Left cardiac atrium (tissue), 4 donors: ENCODE measurements at regions of chr12 and their contacts with region 1.

Region 1: GRCh38 chr12:104108755-104109445 is 29.1 kb downstream of the NFYB start:
- DNase-seq: peak; percentile 71
- ATAC-seq: peak; percentile 63 to 82

Region 2: GRCh38 chr12:103626498-103626897 is 482.4 kb before region 1 on chr12:
- intact Hi-C with region 1: loop called in 1 of 2 experiments (anchors 10 kb)
- DNase-seq: peak; percentile 48
- ATAC-seq: peak; percentile 66 to 93

Region 3: DNA sequence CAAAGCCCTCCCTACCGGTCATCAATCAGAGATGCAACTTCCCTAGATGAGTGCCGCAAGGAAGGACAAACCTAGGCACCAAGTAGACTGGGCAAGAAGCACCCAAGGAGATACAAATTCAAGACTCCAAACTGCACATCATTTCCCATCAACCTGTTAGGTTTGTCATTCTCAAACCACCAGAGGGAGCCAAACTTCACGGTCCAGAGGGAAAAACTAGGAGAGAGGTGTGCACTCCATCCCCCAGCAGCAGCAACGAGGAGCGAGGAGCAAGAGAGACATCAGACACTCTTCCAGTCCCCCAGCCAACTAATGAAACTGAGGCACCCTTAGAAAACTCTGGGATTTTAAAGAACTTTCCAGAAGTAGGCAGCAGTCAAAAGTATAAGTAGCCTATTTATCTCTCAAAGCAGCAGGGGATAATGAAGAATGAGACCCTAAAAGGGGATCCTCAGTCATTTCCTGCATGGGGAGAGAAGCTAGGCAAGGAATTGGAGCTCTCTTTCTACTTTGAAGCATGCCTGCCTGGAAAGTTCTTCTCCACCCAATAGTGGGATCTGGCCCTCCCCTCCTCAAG is 230.9 kb before region 1 on chr12:
- intact Hi-C with region 1: loop called (anchors 5 to 10 kb)
- DNase-seq: peak; percentile 50
- ATAC-seq: peak; percentile 57 to 86

Region 4: GRCh38 chr12:103956516-103957027 is 152.3 kb before region 1 on chr12:
- intact Hi-C with region 1: loop called in 1 of 2 experiments (anchors 10 kb)
- DNase-seq: no peak
- ATAC-seq: peak; percentile 53 to 69

Region 5: DNA sequence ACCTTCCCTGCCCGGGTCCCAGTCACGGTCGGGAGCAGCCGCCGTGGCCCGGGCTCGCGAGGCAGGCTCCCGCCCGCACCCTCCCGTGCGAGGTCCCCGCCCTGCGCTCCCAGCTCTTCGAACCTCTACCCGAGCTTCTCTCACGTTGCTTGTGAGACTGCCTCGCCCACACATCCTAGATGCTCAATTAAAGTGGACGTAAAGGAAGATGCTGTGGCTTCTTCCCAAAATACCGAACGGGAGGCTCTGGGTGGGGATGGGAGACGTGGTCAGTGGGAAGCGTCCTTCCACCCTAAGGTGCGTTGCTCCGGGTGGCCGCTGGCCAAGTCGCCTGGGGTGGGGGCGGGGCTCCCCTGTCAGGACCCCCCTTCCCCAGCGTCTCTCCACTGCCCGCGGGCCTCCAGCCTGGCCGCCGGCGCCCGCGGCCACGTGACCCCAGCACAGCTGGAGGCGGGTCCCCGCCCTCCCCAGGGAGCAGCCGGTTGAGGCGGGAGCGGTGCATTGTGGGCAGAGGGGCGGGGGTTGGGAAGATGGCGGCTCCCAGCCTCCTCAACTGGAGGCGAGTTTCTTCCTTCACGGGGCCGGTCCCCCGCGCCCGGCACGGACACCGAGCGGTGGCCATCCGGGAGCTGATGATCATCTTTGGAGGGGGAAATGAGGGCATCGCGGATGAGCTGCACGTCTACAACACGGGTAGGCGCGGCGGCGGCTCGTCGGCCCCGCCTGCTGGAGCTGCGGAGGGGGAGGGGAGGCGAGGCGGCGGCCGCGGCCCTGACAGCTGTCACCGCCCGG is 44.7 kb before region 1 on chr12 and contains the start of gene HCFC2:
- intact Hi-C with region 1: loop called in 1 of 2 experiments (anchors 5 kb)
- DNase-seq: peak; percentile 93
- ATAC-seq: peak; percentile 99
- total RNA-seq, gene HCFC2: 9.2 to 10.2 TPM